IMR-90 (cell line): ENCODE measurements at regions of chr10 and their contacts with region 1.

Region 1: GRCh38 chr10:102782673-102783551 is 39.2 kb downstream of the WBP1L start:
- DNase-seq: peak; percentile 95
- ATAC-seq: peak; percentile 90
- H3K4me3 ChIP-seq: no peak overlapping the region
- H3K27ac ChIP-seq: peak overlapping the region; percentile 5; the same call in 1 of the 2 replicates
- H3K4me1 ChIP-seq: peaks cover 16% of the 10 kb centered on the region
- H3K27me3 ChIP-seq: peaks cover 5% of the 10 kb centered on the region
- CTCF ChIP-seq: no peak
- POLR2A ChIP-seq: no peak
- RAD21 ChIP-seq: no peak; the same call in 1 of the 2 replicates

Region 2: GRCh38 chr10:102743588-102744373 is 39.1 kb before region 1 on chr10 and contains the start of gene WBP1L:
- CTCF ChIA-PET with region 1: no interaction called
- POLR2A ChIA-PET with region 1: no interaction called
- dilution Hi-C with region 1: no loop called
- in situ Hi-C with region 1: no loop called
- intact Hi-C with region 1: loop called (anchors 5 kb)
- DNase-seq: peak; percentile 99
- ATAC-seq: peak; percentile 96
- H3K4me3 ChIP-seq: peak within 1 kb of the TSS; percentile 77
- H3K27ac ChIP-seq: peak within 1 kb of the TSS; percentile 86
- H3K4me1 ChIP-seq: no peaks in the 10 kb centered on the region
- H3K27me3 ChIP-seq: no peaks in the 10 kb centered on the region
- CTCF ChIP-seq: no peak
- POLR2A ChIP-seq: peak; percentile 79; the same call in 1 of the 2 replicates
- RAD21 ChIP-seq: no peak
- total RNA-seq, gene WBP1L: 29.2 and 31.0 TPM in 2 replicates

Region 3: DNA sequence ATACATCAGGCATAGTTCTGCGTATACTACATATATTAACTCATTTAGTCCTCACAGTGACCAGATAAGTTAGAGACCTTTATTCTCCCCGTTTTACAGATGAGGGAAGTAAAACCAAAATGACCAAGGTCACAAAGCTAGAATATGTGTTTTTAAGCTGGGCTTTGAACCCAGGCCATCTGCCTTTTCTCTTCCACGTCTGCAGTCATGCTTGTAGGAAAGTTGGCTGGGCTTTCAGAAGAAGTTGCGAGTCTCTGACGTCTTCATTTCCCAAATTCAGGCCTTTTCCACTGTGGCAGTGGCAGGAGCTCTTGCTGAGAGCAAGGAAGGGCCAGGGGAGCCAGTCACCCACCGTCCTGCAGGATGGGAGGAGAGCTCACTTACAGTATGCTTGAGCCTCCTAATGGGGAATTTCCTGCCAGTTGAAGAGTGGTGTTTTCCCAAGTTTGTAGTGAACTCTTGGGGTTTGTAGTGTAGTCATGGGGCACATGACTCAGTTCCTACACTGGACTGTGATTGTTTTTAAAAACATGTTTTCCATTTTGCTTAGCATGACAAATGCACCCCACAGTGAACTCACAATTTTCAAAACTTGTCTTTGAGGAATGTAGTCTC is 20.1 kb after region 1 on chr10:
- CTCF ChIA-PET with region 1: no interaction called
- POLR2A ChIA-PET with region 1: no interaction called
- dilution Hi-C with region 1: no loop called
- in situ Hi-C with region 1: no loop called
- intact Hi-C with region 1: loop called (anchors 2 kb)
- DNase-seq: peak; percentile 99
- ATAC-seq: peak; percentile 96
- H3K4me3 ChIP-seq: no peak overlapping the region
- H3K27ac ChIP-seq: peak overlapping the region; percentile 62
- H3K4me1 ChIP-seq: peaks cover 12% of the 10 kb centered on the region
- H3K27me3 ChIP-seq: no peaks in the 10 kb centered on the region
- CTCF ChIP-seq: 0 out of 2 replicates have a peak, but pooled peaks have one; percentile 6
- POLR2A ChIP-seq: no peak
- RAD21 ChIP-seq: peak; percentile 35

Region 4: DNA sequence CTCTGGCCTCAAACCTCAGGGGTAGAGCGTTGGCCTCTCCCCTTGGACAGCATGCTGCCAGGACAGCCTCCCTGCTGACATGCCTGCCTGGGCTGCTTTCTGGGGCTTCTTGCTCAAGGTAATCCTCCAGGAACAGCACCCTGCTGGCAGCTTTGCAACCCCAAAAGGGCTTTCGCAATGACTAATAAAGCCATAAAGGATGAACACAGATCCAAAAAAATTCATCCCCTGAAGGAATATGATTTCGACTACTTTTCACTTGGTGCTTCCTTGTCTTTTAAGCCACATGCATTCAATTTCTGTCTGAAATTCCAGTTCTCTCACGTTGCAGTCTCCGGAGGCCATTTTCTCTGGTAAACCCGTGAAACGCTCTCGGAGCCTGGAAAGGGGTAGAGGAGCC is 1087.6 kb after region 1 on chr10:
- CTCF ChIA-PET with region 1: no interaction called
- POLR2A ChIA-PET with region 1: no interaction called
- dilution Hi-C with region 1: no loop called
- in situ Hi-C with region 1: no loop called
- intact Hi-C with region 1: no loop called
- DNase-seq: peak; percentile 40
- ATAC-seq: peak; percentile 60
- H3K4me3 ChIP-seq: no peak overlapping the region
- H3K27ac ChIP-seq: no peak overlapping the region
- H3K4me1 ChIP-seq: no peaks in the 10 kb centered on the region
- H3K27me3 ChIP-seq: no peaks in the 10 kb centered on the region; the same call in 1 of the 2 replicates
- CTCF ChIP-seq: no peak
- POLR2A ChIP-seq: no peak
- RAD21 ChIP-seq: no peak